ENCODE measurements at regions of chr3 and their contacts with region 1.

Region 1: GRCh38 chr3:8416965-8417364 is 84.7 kb upstream of the LMCD1 start:
- DNase-seq: peak; percentile 31
- H3K4me3 ChIP-seq: peak overlapping the region in 2 of 3 experiments; percentile 14 to 15
- H3K27ac ChIP-seq: no peak overlapping the region
- H3K4me1 ChIP-seq: no peaks in the 10 kb centered on the region
- H3K27me3 ChIP-seq: no peaks in the 10 kb centered on the region
- CTCF ChIP-seq: no peak

Region 2: GRCh38 chr3:6807967-6808588 is 1608.9 kb before region 1 on chr3:
- CTCF ChIA-PET with region 1: interaction called, 3 read pairs
- dilution Hi-C with region 1: no loop called
- in situ Hi-C with region 1: no loop called
- intact Hi-C with region 1: loop called (anchors 10 kb)
- DNase-seq: peak; percentile 94
- H3K4me3 ChIP-seq: no peak overlapping the region
- H3K27ac ChIP-seq: peak overlapping the region; percentile 62
- H3K4me1 ChIP-seq: peaks cover 41% of the 10 kb centered on the region
- H3K27me3 ChIP-seq: no peaks in the 10 kb centered on the region
- CTCF ChIP-seq: no peak

Region 3: DNA sequence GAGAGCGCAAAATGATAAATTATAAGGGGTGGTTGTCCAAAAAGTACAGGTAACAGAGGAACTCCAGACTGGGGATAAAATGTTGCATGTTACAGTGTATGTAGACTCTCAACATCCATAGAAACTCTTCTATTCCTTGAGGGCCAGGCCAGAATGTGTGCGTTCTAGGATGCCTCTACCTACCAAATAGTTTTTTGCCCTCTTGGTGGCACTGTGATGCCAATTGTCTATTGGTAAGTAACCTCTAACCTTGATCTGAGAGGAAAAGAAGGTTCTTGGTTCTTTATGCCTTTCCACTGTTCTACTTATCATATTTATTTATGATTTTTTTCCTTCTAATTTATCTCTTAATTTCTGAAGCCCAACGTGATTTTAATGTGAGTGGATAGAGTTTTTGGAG is 1131.5 kb before region 1 on chr3:
- CTCF ChIA-PET with region 1: no interaction called
- dilution Hi-C with region 1: no loop called
- in situ Hi-C with region 1: no loop called
- intact Hi-C with region 1: loop called (anchors 10 kb)
- DNase-seq: peak; percentile 9
- H3K4me3 ChIP-seq: no peak overlapping the region
- H3K27ac ChIP-seq: no peak overlapping the region
- H3K4me1 ChIP-seq: no peaks in the 10 kb centered on the region
- H3K27me3 ChIP-seq: no peaks in the 10 kb centered on the region
- CTCF ChIP-seq: peak; percentile 20 to 38

Region 4: DNA sequence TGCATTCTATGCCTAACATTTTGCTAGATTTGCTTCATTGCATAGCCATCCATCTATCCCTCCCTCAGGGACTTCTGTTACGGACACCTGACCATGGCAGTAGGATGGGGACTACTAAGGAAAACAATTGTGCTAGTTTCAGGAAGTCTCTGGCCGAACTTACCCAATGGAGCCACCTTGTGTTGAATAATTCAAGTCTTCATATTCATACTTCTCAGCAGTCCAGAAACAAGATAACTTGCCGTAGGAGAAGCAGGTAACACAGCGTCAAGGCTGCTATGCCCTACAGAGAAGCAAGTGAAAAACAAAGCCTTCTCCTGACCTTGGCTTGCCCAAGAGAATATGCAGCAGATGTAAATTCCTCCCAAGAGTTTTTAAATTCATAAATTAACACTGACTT is 870.7 kb before region 1 on chr3:
- CTCF ChIA-PET with region 1: no interaction called
- dilution Hi-C with region 1: no loop called
- in situ Hi-C with region 1: no loop called
- intact Hi-C with region 1: loop called (anchors 5 kb)
- DNase-seq: peak; percentile 24
- H3K4me3 ChIP-seq: no peak overlapping the region
- H3K27ac ChIP-seq: no peak overlapping the region
- H3K4me1 ChIP-seq: no peaks in the 10 kb centered on the region
- H3K27me3 ChIP-seq: no peaks in the 10 kb centered on the region
- CTCF ChIP-seq: peak in 1 of 2 donors; percentile 34

Region 5: GRCh38 chr3:8239718-8240695 is 177.0 kb before region 1 on chr3:
- CTCF ChIA-PET with region 1: interaction called, 4 read pairs
- dilution Hi-C with region 1: no loop called
- in situ Hi-C with region 1: no loop called
- intact Hi-C with region 1: loop called (anchors 1 kb)
- DNase-seq: peak; percentile 13
- H3K4me3 ChIP-seq: no peak overlapping the region
- H3K27ac ChIP-seq: no peak overlapping the region
- H3K4me1 ChIP-seq: no peaks in the 10 kb centered on the region
- H3K27me3 ChIP-seq: no peaks in the 10 kb centered on the region
- CTCF ChIP-seq: peak; percentile 83 to 94

Region 6: DNA sequence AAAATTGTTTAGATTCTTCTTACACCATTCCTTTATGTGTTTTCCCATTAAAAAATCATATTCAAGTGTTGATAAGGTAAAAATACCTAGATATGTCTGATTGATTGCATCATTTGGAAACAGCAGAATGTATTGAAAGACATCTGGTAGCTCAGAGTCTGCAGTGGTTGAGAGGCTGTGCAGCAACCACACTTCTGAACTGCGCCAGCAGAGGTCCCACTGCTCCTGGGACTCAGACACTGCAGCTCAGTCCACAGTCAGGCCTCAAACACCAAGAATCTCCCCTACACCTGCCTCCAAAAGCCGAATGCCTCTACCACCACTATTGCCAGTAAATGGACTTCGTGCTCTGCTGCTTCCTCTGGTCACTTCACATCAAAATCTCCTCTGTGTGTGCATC is 92.2 kb before region 1 on chr3:
- CTCF ChIA-PET with region 1: interaction called, 37 read pairs
- dilution Hi-C with region 1: no loop called
- in situ Hi-C with region 1: no loop called
- intact Hi-C with region 1: loop called (anchors 1 kb)
- DNase-seq: peak; percentile 13
- H3K4me3 ChIP-seq: no peak overlapping the region
- H3K27ac ChIP-seq: no peak overlapping the region
- H3K4me1 ChIP-seq: peaks cover 10% of the 10 kb centered on the region
- H3K27me3 ChIP-seq: peaks cover 2% of the 10 kb centered on the region
- CTCF ChIP-seq: peak; percentile 50 to 70

Region 7: GRCh38 chr3:8357859-8358258 is 59.1 kb before region 1 on chr3:
- CTCF ChIA-PET with region 1: no interaction called
- dilution Hi-C with region 1: no loop called
- in situ Hi-C with region 1: no loop called
- intact Hi-C with region 1: no loop called
- DNase-seq: no peak
- H3K4me3 ChIP-seq: no peak overlapping the region
- H3K27ac ChIP-seq: no peak overlapping the region
- H3K4me1 ChIP-seq: no peaks in the 10 kb centered on the region
- H3K27me3 ChIP-seq: no peaks in the 10 kb centered on the region
- CTCF ChIP-seq: no peak

Region 8: GRCh38 chr3:8460815-8461456 is 44.0 kb after region 1 on chr3:
- CTCF ChIA-PET with region 1: no interaction called
- dilution Hi-C with region 1: no loop called
- in situ Hi-C with region 1: no loop called
- intact Hi-C with region 1: no loop called
- DNase-seq: peak; percentile 4
- H3K4me3 ChIP-seq: no peak overlapping the region
- H3K27ac ChIP-seq: no peak overlapping the region
- H3K4me1 ChIP-seq: no peaks in the 10 kb centered on the region
- H3K27me3 ChIP-seq: no peaks in the 10 kb centered on the region
- CTCF ChIP-seq: no peak

Measured in mammary epithelial cell (primary cell).